ENCODE measurements at regions of chr5 and their contacts with region 1.

Region 1: GRCh38 chr5:36875790-36876388 is 680 bp upstream of the NIPBL start:
- DNase-seq: peak; percentile 72
- H3K4me3 Mint-ChIP-seq: peak overlapping the region; percentile 87
- H3K27ac Mint-ChIP-seq: peak overlapping the region; percentile 97
- H3K4me1 Mint-ChIP-seq: peaks cover 36% of the 10 kb centered on the region
- H3K27me3 Mint-ChIP-seq: no peaks in the 10 kb centered on the region

Region 2: DNA sequence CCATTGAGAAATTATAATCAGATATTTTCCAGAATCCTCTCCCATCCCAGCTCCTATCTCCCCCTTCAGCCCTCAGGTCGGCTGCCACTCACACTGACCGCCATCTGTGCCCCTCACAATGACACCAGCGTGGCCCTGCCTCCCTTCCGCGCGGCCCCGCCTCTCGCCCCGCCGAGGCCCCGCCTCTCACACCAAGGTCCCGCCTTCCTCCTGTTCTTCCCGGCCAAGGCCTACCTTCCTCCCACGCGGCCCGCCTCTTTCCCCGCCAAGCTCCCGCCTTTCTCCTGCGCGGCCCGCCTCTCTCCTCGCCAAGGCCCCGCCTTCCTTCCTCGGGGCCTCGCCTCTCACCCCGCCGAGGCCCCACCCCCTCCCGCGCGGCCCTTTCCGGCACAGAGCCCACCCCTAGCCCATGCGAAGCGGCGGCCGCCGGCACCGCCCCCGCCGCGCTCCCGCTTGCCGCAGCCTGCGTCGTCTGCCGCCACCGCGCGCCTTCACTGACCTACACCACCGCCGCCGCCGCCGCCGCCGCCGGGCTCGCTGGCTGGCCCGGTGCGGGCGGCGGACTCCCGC is 1946.7 kb before region 1 on chr5 and contains the start of gene DNAJC21:
- intact Hi-C with region 1: loop called (anchors 5 kb)
- DNase-seq: peak; percentile 97
- H3K4me3 Mint-ChIP-seq: peak within 1 kb of the TSS; percentile 96
- H3K27ac Mint-ChIP-seq: peak within 1 kb of the TSS; percentile 92
- H3K4me1 Mint-ChIP-seq: peaks cover 37% of the 10 kb centered on the region
- H3K27me3 Mint-ChIP-seq: no peaks in the 10 kb centered on the region
- total RNA-seq, gene DNAJC21: 62.7 and 65.2 TPM in 2 replicates

Region 3: DNA sequence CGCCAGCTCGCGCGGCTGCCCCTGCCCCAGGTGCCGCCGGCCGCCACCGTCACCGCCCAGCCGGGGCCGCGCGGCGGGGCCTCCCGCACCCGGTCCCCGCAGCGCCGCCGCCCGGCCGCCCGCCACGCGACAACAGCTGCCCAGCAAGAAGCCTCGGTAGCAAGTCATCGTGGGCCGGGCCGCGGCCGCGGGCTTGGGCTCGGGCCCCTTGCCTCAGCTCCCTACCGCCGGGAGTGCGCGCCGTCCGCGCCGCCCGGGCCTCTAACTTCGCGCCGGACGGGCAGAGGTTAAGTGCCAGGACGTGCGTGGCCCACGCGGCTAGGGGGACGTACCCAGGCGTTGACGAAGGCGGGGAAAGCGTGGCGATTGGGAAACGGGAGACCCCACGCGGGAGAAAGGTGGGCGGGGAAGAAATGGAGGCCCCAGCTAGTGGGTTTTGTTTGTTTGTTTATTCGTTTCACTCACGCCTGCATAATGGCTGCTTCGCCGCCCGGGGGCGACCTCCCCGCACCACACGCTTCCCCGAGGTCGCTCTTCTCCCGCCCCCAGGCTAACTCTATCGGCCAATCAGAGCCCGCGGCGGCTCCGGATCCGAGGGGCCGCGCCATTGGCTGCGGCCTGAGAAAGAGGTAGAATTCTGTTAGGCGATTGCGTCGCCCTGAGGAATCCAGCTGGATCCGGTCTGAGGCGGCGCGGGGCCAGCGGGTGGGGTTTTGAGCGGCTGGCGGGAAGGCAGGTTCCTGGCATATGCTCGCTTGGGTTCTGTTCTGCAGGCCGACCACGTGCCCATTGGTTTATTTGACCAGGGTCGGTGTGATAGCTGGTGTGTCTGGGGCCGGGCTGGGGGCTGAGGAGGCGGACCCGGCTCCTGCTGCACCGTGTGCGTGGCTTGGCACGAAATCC is 634.0 kb before region 1 on chr5 and contains the start of gene NADK2:
- intact Hi-C with region 1: loop called (anchors 1 kb)
- DNase-seq: peak; percentile 92
- H3K4me3 Mint-ChIP-seq: peak within 1 kb of the TSS; percentile 82
- H3K27ac Mint-ChIP-seq: peak within 1 kb of the TSS; percentile 94
- H3K4me1 Mint-ChIP-seq: peaks cover 28% of the 10 kb centered on the region
- H3K27me3 Mint-ChIP-seq: peaks cover 12% of the 10 kb centered on the region
- total RNA-seq, gene NADK2: 17.8 and 19.4 TPM in 2 replicates

Region 4: GRCh38 chr5:36836831-36837230 is 39.1 kb before region 1 on chr5:
- intact Hi-C with region 1: no loop called
- DNase-seq: no peak
- H3K4me3 Mint-ChIP-seq: no peak overlapping the region
- H3K27ac Mint-ChIP-seq: no peak overlapping the region
- H3K4me1 Mint-ChIP-seq: no peaks in the 10 kb centered on the region
- H3K27me3 Mint-ChIP-seq: peaks cover 27% of the 10 kb centered on the region

Region 5: GRCh38 chr5:36861820-36862219 is 14.1 kb before region 1 on chr5:
- intact Hi-C with region 1: no loop called
- DNase-seq: no peak
- H3K4me3 Mint-ChIP-seq: no peak overlapping the region
- H3K27ac Mint-ChIP-seq: no peak overlapping the region
- H3K4me1 Mint-ChIP-seq: no peaks in the 10 kb centered on the region
- H3K27me3 Mint-ChIP-seq: peaks cover 28% of the 10 kb centered on the region

Region 6: GRCh38 chr5:36919238-36919637 is 43.3 kb after region 1 on chr5:
- intact Hi-C with region 1: no loop called
- DNase-seq: no peak
- H3K4me3 Mint-ChIP-seq: no peak overlapping the region
- H3K27ac Mint-ChIP-seq: no peak overlapping the region
- H3K4me1 Mint-ChIP-seq: peaks cover 6% of the 10 kb centered on the region
- H3K27me3 Mint-ChIP-seq: no peaks in the 10 kb centered on the region

Region 7: GRCh38 chr5:36944607-36945225 is 68.8 kb after region 1 on chr5:
- intact Hi-C with region 1: loop called (anchors 5 kb)
- DNase-seq: no peak
- H3K4me3 Mint-ChIP-seq: no peak overlapping the region
- H3K27ac Mint-ChIP-seq: no peak overlapping the region
- H3K4me1 Mint-ChIP-seq: peaks cover 10% of the 10 kb centered on the region
- H3K27me3 Mint-ChIP-seq: no peaks in the 10 kb centered on the region

Region 8: GRCh38 chr5:37034955-37035354 is 159.1 kb after region 1 on chr5:
- intact Hi-C with region 1: no loop called
- DNase-seq: no peak
- H3K4me3 Mint-ChIP-seq: no peak overlapping the region
- H3K27ac Mint-ChIP-seq: no peak overlapping the region
- H3K4me1 Mint-ChIP-seq: peaks cover 7% of the 10 kb centered on the region
- H3K27me3 Mint-ChIP-seq: no peaks in the 10 kb centered on the region

Region 9: DNA sequence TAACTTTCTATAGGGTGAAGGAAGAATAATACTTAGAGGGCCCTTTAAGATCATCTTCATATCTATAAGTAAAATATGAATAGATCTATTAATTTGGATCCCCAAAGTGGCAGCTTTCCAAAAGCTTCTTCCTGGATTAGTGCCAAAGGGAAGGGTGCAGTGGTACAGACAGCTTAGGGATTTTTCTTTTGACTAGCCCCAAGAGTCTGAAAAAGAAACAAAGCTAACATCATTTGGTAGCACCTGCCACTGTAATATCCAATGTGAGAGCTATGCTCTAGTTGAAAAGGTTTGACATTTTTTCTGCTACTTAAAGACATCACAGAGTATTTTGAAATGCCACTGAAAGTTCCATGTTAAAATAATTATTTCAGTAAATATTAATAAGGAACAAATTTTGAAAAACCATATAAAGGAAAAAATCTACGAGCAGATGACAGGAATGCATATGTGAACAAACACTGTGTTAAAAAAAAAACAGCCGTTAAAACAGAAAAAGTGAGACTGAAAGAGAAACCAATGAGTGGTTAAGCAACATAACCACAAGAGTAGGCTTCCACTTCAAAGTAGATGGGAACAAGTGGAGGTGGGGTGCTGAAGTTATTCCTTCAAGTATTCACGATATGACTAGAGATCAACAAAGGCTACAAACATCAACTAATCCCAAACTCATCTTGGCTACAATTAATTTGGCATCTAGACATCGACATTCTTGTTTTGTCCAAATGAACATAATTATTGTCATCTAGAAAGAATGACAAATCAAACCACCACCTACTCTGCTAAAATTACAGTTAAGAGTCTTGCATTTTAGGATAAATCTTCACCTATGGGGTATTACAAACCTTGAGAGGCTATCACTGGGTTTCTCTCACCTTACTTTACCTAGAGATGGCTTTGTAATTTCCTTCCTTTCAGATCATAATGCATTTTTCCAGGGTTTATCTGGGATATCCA is 235.8 kb after region 1 on chr5:
- intact Hi-C with region 1: loop called (anchors 5 kb)
- DNase-seq: peak; percentile 36
- H3K4me3 Mint-ChIP-seq: no peak overlapping the region
- H3K27ac Mint-ChIP-seq: peak overlapping the region; percentile 70
- H3K4me1 Mint-ChIP-seq: peaks cover 37% of the 10 kb centered on the region
- H3K27me3 Mint-ChIP-seq: no peaks in the 10 kb centered on the region

Region 10: DNA sequence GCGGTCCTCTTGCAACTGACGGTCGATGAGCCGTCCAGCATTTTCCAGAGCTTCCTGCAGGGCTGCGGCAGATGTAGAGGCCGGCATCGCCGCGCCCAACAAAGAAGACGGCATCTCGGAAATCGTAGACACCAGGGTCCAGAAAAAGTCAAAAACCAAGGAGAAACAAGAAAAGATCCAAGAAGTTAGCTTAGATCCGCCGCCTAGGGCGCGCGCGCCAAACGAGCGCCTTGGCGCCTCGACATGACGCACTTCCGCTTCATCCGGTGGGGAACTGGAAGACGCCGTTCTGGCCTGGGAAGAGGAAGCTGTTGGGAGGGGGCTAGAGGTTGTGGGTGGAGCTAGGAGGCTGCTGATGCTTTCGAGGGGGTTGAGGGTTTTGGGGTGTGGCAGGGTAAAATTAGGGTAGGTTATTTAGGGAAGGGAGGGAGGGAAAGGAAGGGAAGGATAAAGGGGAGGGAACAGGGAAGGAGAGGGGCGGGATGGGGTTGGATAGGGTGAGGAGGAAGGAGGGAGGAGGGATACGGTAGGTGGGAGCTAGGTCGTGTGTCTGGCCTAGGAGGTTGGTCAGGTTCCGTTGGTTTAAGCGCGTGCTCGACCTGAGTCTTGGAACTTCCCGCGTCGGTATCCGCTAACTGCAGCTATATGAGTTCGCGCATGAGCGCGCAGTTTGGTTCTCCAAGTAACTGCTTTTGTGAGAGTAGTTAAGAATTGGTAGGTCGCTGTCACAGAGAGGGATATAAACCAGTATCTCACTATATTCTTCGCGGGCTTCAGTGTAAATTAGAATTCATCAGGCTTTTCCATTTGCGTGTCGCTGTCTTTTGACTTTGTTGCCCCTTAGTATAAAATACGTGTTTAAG is 495.2 kb after region 1 on chr5 and contains the start of gene NUP155:
- intact Hi-C with region 1: loop called (anchors 2 kb)
- DNase-seq: peak; percentile 86
- H3K4me3 Mint-ChIP-seq: peak within 1 kb of the TSS; percentile 93
- H3K27ac Mint-ChIP-seq: peak within 1 kb of the TSS; percentile 92
- H3K4me1 Mint-ChIP-seq: peaks cover 22% of the 10 kb centered on the region
- H3K27me3 Mint-ChIP-seq: no peaks in the 10 kb centered on the region
- total RNA-seq, gene NUP155: 66.8 and 69.8 TPM in 2 replicates